CD8-positive, alpha-beta T cell (primary cell): ENCODE measurements at regions of chr19 and their contacts with region 1.

Region 1: GRCh38 chr19:47112997-47113849 is at the start of gene ZC3H4:
- DNase-seq: peak; percentile 98 to 100 (median 99)
- ATAC-seq: peak; percentile 82
- H3K4me3 ChIP-seq: peak within 1 kb of the TSS; percentile 83 to 94
- H3K4me3 Mint-ChIP-seq: peak within 1 kb of the TSS; percentile 96
- H3K27ac ChIP-seq: peak within 1 kb of the TSS; percentile 99
- H3K27ac Mint-ChIP-seq: peak within 1 kb of the TSS; percentile 99
- H3K4me1 ChIP-seq: peaks cover 29% of the 10 kb centered on the region
- H3K4me1 Mint-ChIP-seq: peaks cover 32% of the 10 kb centered on the region
- H3K27me3 ChIP-seq: no peaks in the 10 kb centered on the region
- H3K27me3 Mint-ChIP-seq: no peaks in the 10 kb centered on the region
- CTCF ChIP-seq: no peak
- total RNA-seq, gene ZC3H4: 30.0 to 33.0 TPM

Region 2: DNA sequence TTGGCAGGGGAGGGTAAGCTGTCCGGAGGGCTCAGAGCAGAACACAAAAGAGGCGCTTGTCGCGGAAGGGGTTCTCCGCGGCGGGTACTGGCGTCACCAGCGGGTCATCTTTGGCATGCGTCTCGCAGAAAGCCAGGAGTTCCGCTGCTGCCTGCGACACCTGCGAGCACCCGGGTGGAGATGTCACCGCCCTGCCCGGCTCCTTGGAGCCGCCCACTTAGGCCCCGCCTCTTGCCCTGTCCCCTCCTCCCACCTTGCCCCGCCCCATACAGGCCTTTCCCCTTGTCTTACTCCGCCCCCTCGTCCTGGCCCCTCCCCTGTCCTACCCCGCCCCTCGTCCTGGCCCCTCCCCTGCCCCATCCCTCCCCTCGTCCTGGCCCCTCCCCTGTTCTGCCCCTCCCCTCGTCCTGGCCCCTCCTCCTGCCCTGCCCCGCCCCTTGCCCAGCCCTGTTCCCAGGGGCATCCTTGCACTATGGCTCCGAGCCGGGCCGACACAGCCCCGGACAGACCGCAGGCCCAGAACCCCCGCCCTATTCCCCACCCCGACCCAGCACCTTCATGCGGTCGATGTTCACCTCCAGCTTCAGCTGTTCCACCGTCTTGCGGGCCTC is 479.1 kb before region 1 on chr19:
- CTCF ChIA-PET with region 1: no interaction called
- POLR2A ChIA-PET with region 1: no interaction called
- intact Hi-C with region 1: loop called in 1 of 2 experiments (anchors 2 kb)
- DNase-seq: peak; percentile 86 to 96 (median 92)
- ATAC-seq: peak; percentile 83
- H3K4me3 ChIP-seq: peak overlapping the region; percentile 40 to 59
- H3K4me3 Mint-ChIP-seq: peak overlapping the region; percentile 80
- H3K27ac ChIP-seq: peak overlapping the region; percentile 35 to 48
- H3K27ac Mint-ChIP-seq: peak overlapping the region; percentile 90
- H3K4me1 ChIP-seq: peaks cover 36% of the 10 kb centered on the region
- H3K4me1 Mint-ChIP-seq: peaks cover 24% of the 10 kb centered on the region
- H3K27me3 ChIP-seq: peaks cover 0 to 24% of the 10 kb centered on the region in 2 experiments
- H3K27me3 Mint-ChIP-seq: no peaks in the 10 kb centered on the region
- CTCF ChIP-seq: no peak

Region 3: GRCh38 chr19:47047763-47048405 is 65.3 kb before region 1 on chr19:
- CTCF ChIA-PET with region 1: no interaction called
- POLR2A ChIA-PET with region 1: interaction called, 6 read pairs
- intact Hi-C with region 1: loop called (anchors 1 kb)
- DNase-seq: peak; percentile 22 to 85 (median 65)
- ATAC-seq: peak; percentile 37
- H3K4me3 ChIP-seq: peak overlapping the region; percentile 67 to 96
- H3K4me3 Mint-ChIP-seq: peak overlapping the region; percentile 98
- H3K27ac ChIP-seq: peak overlapping the region; percentile 31 to 62
- H3K27ac Mint-ChIP-seq: peak overlapping the region; percentile 91
- H3K4me1 ChIP-seq: peaks cover 8% of the 10 kb centered on the region
- H3K4me1 Mint-ChIP-seq: peaks cover 20% of the 10 kb centered on the region
- H3K27me3 ChIP-seq: no peaks in the 10 kb centered on the region
- H3K27me3 Mint-ChIP-seq: no peaks in the 10 kb centered on the region
- CTCF ChIP-seq: no peak

Region 4: GRCh38 chr19:47094557-47095475 is 18.4 kb before region 1 on chr19:
- CTCF ChIA-PET with region 1: interaction called, 3 read pairs
- POLR2A ChIA-PET with region 1: interaction called, 6 read pairs
- intact Hi-C with region 1: loop called (anchors 2 kb)
- DNase-seq: peak in 6 of 9 experiments; percentile 16 to 64 (median 34)
- ATAC-seq: peak; percentile 70
- H3K4me3 ChIP-seq: peak overlapping the region in 1 of 2 experiments; percentile 1
- H3K4me3 Mint-ChIP-seq: peak overlapping the region; percentile 47
- H3K27ac ChIP-seq: peak overlapping the region; percentile 58 to 86
- H3K27ac Mint-ChIP-seq: peak overlapping the region; percentile 94
- H3K4me1 ChIP-seq: peaks cover 26% of the 10 kb centered on the region
- H3K4me1 Mint-ChIP-seq: peaks cover 48% of the 10 kb centered on the region
- H3K27me3 ChIP-seq: no peaks in the 10 kb centered on the region
- H3K27me3 Mint-ChIP-seq: no peaks in the 10 kb centered on the region
- CTCF ChIP-seq: no peak

Region 5: DNA sequence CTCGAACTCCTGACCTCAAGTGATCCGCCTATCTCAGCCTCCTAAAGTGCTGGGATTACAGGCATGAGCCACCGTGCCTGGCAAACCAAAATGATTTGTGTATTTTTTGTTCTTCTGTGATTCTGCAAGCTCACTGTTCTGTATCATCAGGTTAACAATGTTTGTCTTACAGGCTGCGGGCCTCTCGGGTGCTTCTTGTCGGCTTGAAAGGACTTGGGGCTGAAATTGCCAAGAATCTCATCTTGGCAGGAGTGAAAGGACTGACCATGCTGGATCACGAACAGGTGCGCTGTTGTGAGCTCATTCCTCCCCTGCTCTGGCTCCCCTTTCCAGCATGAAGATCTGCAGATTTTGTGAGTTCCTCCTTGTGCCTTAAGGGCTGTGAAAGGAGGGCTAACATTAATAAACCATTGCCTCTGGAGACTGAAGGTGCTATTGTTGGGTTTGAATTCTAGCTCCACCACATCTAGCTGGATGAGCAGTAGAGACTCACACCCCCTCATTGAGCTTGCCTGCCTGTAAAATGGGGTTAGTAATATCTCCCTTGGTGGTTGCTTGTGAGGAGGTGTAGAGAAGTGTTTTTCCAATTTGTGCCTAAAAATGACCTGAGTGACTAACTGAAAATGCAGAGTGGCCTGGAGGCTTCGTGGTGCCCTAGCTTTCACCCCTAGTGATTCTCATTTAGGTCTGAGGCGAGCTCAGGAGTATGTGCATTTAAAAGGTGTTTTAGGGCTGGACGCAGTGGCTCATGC is 30.3 kb after region 1 on chr19:
- CTCF ChIA-PET with region 1: interaction called, 4 read pairs
- POLR2A ChIA-PET with region 1: interaction called, 10 read pairs
- intact Hi-C with region 1: no loop called
- DNase-seq: no peak
- ATAC-seq: no peak
- H3K4me3 ChIP-seq: no peak overlapping the region
- H3K4me3 Mint-ChIP-seq: no peak overlapping the region
- H3K27ac ChIP-seq: no peak overlapping the region
- H3K27ac Mint-ChIP-seq: no peak overlapping the region
- H3K4me1 ChIP-seq: peaks cover 35% of the 10 kb centered on the region
- H3K4me1 Mint-ChIP-seq: peaks cover 56% of the 10 kb centered on the region
- H3K27me3 ChIP-seq: no peaks in the 10 kb centered on the region
- H3K27me3 Mint-ChIP-seq: no peaks in the 10 kb centered on the region
- CTCF ChIP-seq: no peak

Region 6: GRCh38 chr19:47296036-47296435 is 182.8 kb after region 1 on chr19:
- CTCF ChIA-PET with region 1: no interaction called
- POLR2A ChIA-PET with region 1: no interaction called
- intact Hi-C with region 1: no loop called
- DNase-seq: peak; percentile 41 to 87 (median 76)
- ATAC-seq: peak; percentile 91
- H3K4me3 ChIP-seq: no peak overlapping the region
- H3K4me3 Mint-ChIP-seq: no peak overlapping the region
- H3K27ac ChIP-seq: no peak overlapping the region
- H3K27ac Mint-ChIP-seq: no peak overlapping the region
- H3K4me1 ChIP-seq: no peaks in the 10 kb centered on the region
- H3K4me1 Mint-ChIP-seq: peaks cover 3% of the 10 kb centered on the region
- H3K27me3 ChIP-seq: no peaks in the 10 kb centered on the region
- H3K27me3 Mint-ChIP-seq: no peaks in the 10 kb centered on the region
- CTCF ChIP-seq: peak; percentile 68

Region 7: GRCh38 chr19:47348819-47349795 is 235.9 kb after region 1 on chr19 and contains the start of gene DHX34:
- CTCF ChIA-PET with region 1: no interaction called
- POLR2A ChIA-PET with region 1: no interaction called
- intact Hi-C with region 1: loop called in 1 of 2 experiments (anchors 2 kb)
- DNase-seq: peak; percentile 98 to 100 (median 99)
- ATAC-seq: peak; percentile 98
- H3K4me3 ChIP-seq: peak within 1 kb of the TSS; percentile 88 to 93
- H3K4me3 Mint-ChIP-seq: peak within 1 kb of the TSS; percentile 98
- H3K27ac ChIP-seq: peak within 1 kb of the TSS; percentile 71 to 72
- H3K27ac Mint-ChIP-seq: peak within 1 kb of the TSS; percentile 91
- H3K4me1 ChIP-seq: peaks cover 25% of the 10 kb centered on the region
- H3K4me1 Mint-ChIP-seq: peaks cover 38% of the 10 kb centered on the region
- H3K27me3 ChIP-seq: no peaks in the 10 kb centered on the region
- H3K27me3 Mint-ChIP-seq: peaks cover 3% of the 10 kb centered on the region
- CTCF ChIP-seq: peak; percentile 72
- total RNA-seq, gene DHX34: 7.7 to 8.1 TPM